MCF 10A (cell line): ENCODE measurements at regions of chr12 and their contacts with region 1.

Region 1: GRCh38 chr12:1605129-1606020 is 11.0 kb upstream of the FBXL14 start:
- DNase-seq: peak; percentile 83
- H3K4me3 Mint-ChIP-seq: peak overlapping the region; percentile 77
- H3K27ac Mint-ChIP-seq: peak overlapping the region; percentile 86
- H3K4me1 Mint-ChIP-seq: peaks cover 26% of the 10 kb centered on the region
- H3K27me3 Mint-ChIP-seq: no peaks in the 10 kb centered on the region
- CTCF ChIP-seq: peak; percentile 78

Region 2: GRCh38 chr12:1147821-1148220 is 457.6 kb before region 1 on chr12:
- CTCF ChIA-PET with region 1: no interaction called
- POLR2A ChIA-PET with region 1: no interaction called
- intact Hi-C with region 1: no loop called
- DNase-seq: no peak
- H3K4me3 Mint-ChIP-seq: no peak overlapping the region
- H3K27ac Mint-ChIP-seq: no peak overlapping the region
- H3K4me1 Mint-ChIP-seq: no peaks in the 10 kb centered on the region
- H3K27me3 Mint-ChIP-seq: no peaks in the 10 kb centered on the region
- CTCF ChIP-seq: no peak

Region 3: DNA sequence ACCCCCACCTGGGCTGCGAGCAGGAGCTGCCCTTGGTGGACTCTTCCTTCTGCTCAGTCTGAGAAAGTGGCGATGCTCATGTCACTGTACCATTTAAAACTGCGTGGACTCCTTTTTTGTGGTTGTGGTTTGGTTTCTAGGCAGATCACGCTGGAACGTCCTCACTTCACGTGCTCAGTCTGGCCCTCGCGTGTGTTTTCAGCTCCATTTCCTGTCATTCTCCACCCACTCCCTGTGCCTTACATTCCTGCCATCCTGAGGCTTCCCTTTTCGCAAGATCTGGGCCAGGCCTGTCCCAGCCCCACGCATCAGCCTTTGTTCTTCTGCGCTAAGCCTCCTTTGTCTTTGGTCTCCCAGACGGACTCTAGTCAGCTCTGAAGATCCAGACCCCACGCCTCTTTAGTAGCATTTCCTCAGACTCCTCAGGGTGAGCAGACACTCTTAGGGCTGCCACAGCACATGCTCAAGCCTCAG is 116.4 kb before region 1 on chr12:
- CTCF ChIA-PET with region 1: no interaction called
- POLR2A ChIA-PET with region 1: no interaction called
- intact Hi-C with region 1: no loop called
- DNase-seq: peak; percentile 38
- H3K4me3 Mint-ChIP-seq: no peak overlapping the region
- H3K27ac Mint-ChIP-seq: peak overlapping the region; percentile 65
- H3K4me1 Mint-ChIP-seq: peaks cover 13% of the 10 kb centered on the region
- H3K27me3 Mint-ChIP-seq: no peaks in the 10 kb centered on the region
- CTCF ChIP-seq: no peak

Region 4: GRCh38 chr12:1533602-1534304 is 71.6 kb before region 1 on chr12:
- CTCF ChIA-PET with region 1: no interaction called
- POLR2A ChIA-PET with region 1: no interaction called
- intact Hi-C with region 1: no loop called
- DNase-seq: no peak
- H3K4me3 Mint-ChIP-seq: no peak overlapping the region
- H3K27ac Mint-ChIP-seq: no peak overlapping the region
- H3K4me1 Mint-ChIP-seq: no peaks in the 10 kb centered on the region
- H3K27me3 Mint-ChIP-seq: peaks cover 28% of the 10 kb centered on the region
- CTCF ChIP-seq: no peak

Region 5: GRCh38 chr12:1594261-1595025 is 10.9 kb before region 1 on chr12 and contains the start of gene FBXL14:
- CTCF ChIA-PET with region 1: interaction called, 4 read pairs
- POLR2A ChIA-PET with region 1: interaction called, 59 read pairs
- intact Hi-C with region 1: no loop called
- DNase-seq: peak; percentile 70
- H3K4me3 Mint-ChIP-seq: peak within 1 kb of the TSS; percentile 81
- H3K27ac Mint-ChIP-seq: peak within 1 kb of the TSS; percentile 76
- H3K4me1 Mint-ChIP-seq: peaks cover 36% of the 10 kb centered on the region
- H3K27me3 Mint-ChIP-seq: no peaks in the 10 kb centered on the region
- CTCF ChIP-seq: no peak
- total RNA-seq, gene FBXL14: 9.4 and 10.1 TPM in 2 replicates